BJ (cell line): ENCODE measurements at regions of chr1 and their contacts with region 1.

Region 1: DNA sequence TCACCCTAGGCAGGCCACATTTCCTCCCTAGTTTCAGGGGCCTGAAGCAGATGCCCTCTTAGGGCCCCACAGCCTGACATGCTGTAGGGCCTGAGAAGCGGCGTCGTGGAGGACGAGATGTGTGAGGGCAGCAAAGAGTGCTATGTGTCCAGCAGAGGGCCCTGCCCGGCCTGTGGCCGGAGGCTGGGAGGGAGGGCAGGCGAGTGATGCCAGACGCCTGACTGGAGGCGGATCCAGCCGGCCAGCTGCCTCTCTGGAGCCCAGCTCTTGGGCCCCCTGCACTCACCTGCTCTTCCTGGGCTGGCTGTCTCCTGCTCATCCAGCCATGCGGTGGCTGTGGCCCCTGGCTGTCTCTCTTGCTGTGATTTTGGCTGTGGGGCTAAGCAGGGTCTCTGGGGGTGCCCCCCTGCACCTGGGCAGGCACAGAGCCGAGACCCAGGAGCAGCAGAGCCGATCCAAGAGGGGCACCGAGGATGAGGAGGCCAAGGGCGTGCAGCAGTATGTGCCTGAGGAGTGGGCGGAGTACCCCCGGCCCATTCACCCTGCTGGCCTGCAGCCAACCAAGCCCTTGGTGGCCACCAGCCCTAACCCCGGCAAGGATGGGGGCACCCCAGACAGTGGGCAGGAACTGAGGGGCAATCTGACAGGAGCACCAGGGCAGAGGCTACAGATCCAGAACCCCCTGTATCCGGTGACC is at the start of gene GPR37L1:
- DNase-seq: no peak
- H3K4me3 ChIP-seq: no peak within 1 kb of the TSS
- H3K27me3 ChIP-seq: peaks cover 7% of the 10 kb centered on the region
- CTCF ChIP-seq: peak; percentile 65
- polyA plus RNA-seq, gene GPR37L1: not detected in 2 replicates

Region 2: GRCh38 chr1:201609661-201610318 is 513.0 kb before region 1 on chr1:
- CTCF ChIA-PET with region 1: no interaction called
- POLR2A ChIA-PET with region 1: interaction called, 10 read pairs
- DNase-seq: no peak
- H3K4me3 ChIP-seq: no peak overlapping the region
- H3K27me3 ChIP-seq: no peaks in the 10 kb centered on the region
- CTCF ChIP-seq: no peak

Region 3: GRCh38 chr1:202105539-202106276 is 17.1 kb before region 1 on chr1:
- CTCF ChIA-PET with region 1: interaction called, 36 read pairs
- POLR2A ChIA-PET with region 1: no interaction called
- DNase-seq: no peak
- H3K4me3 ChIP-seq: no peak overlapping the region
- H3K27me3 ChIP-seq: no peaks in the 10 kb centered on the region
- CTCF ChIP-seq: no peak

Region 4: DNA sequence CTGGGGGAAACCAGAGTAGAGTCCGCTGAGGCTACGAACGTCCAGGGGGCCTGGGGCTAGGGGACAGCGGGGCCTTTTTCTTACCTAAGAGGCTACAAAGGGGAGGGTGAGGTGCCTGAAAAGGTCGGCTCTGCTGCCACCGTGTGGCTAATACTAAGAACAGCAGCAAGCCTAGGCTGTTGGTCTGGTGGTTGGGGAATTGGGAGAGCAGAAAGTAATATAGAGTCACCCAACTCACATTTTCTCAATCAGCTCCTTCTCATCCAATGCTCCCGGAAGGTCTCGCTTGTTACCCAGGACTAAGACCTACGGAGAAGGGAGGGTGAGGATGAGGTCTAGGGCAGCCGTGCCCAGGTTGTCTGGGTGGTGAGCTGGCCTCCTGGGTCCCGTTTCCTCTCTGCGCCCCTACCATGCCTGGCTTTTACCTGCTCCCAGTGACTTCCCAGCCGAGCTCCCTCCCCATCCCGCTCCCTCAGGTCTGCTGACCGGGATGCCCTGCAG is 12.5 kb after region 1 on chr1:
- CTCF ChIA-PET with region 1: interaction called, 70 read pairs
- POLR2A ChIA-PET with region 1: no interaction called
- DNase-seq: no peak
- H3K4me3 ChIP-seq: no peak overlapping the region
- H3K27me3 ChIP-seq: no peaks in the 10 kb centered on the region
- CTCF ChIP-seq: peak; percentile 92